B cell (primary cell): ENCODE measurements at regions of chr12 and their contacts with region 1.

Region 1: GRCh38 chr12:54398995-54399793 is 14.7 kb upstream of the ZNF385A start:
- DNase-seq: peak; percentile 88
- ATAC-seq: peak; percentile 99
- H3K4me3 ChIP-seq: no peak overlapping the region
- H3K4me3 Mint-ChIP-seq: no peak overlapping the region
- H3K27ac ChIP-seq: no peak overlapping the region
- H3K27ac Mint-ChIP-seq: no peak overlapping the region
- H3K4me1 ChIP-seq: peaks cover 0 to 1% of the 10 kb centered on the region in 2 donors
- H3K4me1 Mint-ChIP-seq: peaks cover 6% of the 10 kb centered on the region
- H3K27me3 ChIP-seq: no peaks in the 10 kb centered on the region
- H3K27me3 Mint-ChIP-seq: no peaks in the 10 kb centered on the region
- CTCF ChIP-seq: peak; percentile 98

Region 2: DNA sequence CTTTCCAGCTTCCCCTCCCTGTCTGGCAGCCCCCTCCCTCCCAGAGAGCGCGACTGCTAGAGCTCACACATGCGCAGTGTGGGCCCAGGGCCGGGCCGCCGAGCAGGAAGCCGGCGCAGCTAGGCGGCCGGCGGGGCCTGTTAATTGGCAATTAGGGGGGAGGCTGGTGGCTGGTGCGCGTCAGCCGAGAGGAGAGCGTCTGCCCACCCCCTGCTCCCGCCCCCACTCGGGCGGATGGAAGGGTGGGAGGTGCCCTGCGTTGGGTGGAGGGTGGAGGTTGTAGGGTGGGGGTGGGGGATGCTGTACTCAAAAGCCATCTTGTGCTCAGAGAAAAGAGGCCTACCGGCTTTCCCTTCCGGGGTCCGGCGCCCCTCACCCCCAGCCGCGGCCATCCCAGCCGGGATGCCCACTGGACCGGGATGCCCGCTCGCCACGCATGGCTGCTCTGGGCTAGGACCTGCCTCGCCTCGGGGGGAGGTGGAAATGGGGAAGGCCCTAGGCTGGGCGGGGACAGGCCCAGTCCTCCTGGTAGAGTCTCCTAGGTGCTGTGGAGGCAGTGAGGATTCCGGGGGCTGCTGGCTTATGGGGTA is 381.2 kb before region 1 on chr12:
- CTCF ChIA-PET with region 1: no interaction called
- POLR2A ChIA-PET with region 1: no interaction called
- intact Hi-C with region 1: no loop called
- DNase-seq: peak; percentile 84
- ATAC-seq: peak; percentile 87
- H3K4me3 ChIP-seq: peak overlapping the region in 4 of 5 experiments; percentile 43 to 71 (median 48)
- H3K4me3 Mint-ChIP-seq: peak overlapping the region; percentile 90
- H3K27ac ChIP-seq: peak overlapping the region; percentile 30 to 40
- H3K27ac Mint-ChIP-seq: peak overlapping the region; percentile 83
- H3K4me1 ChIP-seq: peaks cover 25 to 42% of the 10 kb centered on the region in 2 donors
- H3K4me1 Mint-ChIP-seq: peaks cover 22% of the 10 kb centered on the region
- H3K27me3 ChIP-seq: peaks cover 0 to 93% (median 73%) of the 10 kb centered on the region in 4 experiments
- H3K27me3 Mint-ChIP-seq: peaks cover 63% of the 10 kb centered on the region
- CTCF ChIP-seq: no peak

Region 3: DNA sequence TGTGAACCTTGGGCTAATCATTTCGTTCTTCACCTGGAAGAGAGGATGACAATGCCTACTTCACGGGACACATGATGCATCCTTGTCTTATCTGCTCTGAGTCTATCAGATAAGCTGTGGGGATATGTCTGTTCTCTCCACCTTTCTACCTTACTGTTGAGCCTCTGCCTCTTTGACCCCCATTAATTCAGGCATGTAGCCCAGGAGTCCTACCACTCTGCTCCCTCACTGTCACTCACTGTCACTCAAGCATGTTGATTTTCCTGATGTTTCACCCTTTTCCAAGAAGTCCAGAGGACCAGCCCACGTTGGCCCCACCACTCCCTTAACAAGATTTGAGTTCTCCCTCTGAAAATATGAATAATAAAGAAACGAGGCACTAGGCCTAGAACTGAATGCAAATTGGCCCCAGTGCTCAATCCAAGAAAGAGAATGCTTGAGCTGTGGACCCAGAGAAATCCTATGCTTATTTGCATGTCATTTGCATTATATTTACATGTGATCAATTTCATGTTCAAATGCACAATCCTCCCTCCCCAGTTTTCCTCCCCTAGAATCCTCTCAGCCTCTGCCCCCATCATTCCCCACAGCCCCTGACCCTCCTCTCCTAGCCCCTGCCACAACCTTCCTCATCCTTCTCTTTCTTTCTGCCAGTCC is 204.0 kb before region 1 on chr12:
- CTCF ChIA-PET with region 1: no interaction called
- POLR2A ChIA-PET with region 1: no interaction called
- intact Hi-C with region 1: no loop called
- DNase-seq: peak; percentile 8
- ATAC-seq: no peak
- H3K4me3 ChIP-seq: no peak overlapping the region
- H3K4me3 Mint-ChIP-seq: peak overlapping the region; percentile 62
- H3K27ac ChIP-seq: no peak overlapping the region
- H3K27ac Mint-ChIP-seq: no peak overlapping the region
- H3K4me1 ChIP-seq: peaks cover 35 to 36% of the 10 kb centered on the region in 2 donors
- H3K4me1 Mint-ChIP-seq: peaks cover 37% of the 10 kb centered on the region
- H3K27me3 ChIP-seq: peaks cover 0 to 67% (median 26%) of the 10 kb centered on the region in 4 experiments
- H3K27me3 Mint-ChIP-seq: peaks cover 57% of the 10 kb centered on the region
- CTCF ChIP-seq: no peak

Region 4: DNA sequence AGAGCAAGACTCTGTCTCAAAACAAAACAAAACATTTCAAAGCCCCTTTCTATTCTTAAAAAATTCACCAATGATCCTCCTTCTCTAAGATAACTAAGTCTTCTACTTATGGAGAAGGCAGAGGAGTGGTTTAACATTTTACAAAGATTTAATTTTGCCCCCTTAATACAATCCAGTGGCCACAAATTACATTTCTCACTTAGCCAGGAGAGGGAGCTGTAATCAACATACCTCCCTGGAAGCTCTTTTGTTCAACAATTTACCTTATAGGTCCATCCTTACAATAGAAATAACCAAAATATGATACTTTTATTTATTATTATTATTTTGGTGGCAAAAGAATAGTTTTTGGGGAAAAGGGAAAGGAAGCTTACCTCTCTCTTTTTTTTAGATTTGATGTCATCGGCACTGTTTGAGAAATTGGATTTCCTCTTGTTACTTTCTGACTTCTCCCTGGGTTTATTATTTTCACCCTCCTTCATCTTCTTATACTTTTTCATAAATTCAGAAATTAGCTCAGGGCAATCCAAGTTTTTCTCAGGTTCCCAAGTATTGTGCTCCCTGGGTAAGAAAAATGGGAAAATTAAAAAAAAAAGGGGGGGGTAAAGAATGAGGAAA is 147.4 kb before region 1 on chr12:
- CTCF ChIA-PET with region 1: interaction called, 6 read pairs
- POLR2A ChIA-PET with region 1: no interaction called
- intact Hi-C with region 1: loop called (anchors 1 kb)
- DNase-seq: peak; percentile 63
- ATAC-seq: peak; percentile 56
- H3K4me3 ChIP-seq: no peak overlapping the region
- H3K4me3 Mint-ChIP-seq: no peak overlapping the region
- H3K27ac ChIP-seq: no peak overlapping the region
- H3K27ac Mint-ChIP-seq: no peak overlapping the region
- H3K4me1 ChIP-seq: peaks cover 0 to 4% of the 10 kb centered on the region in 2 donors
- H3K4me1 Mint-ChIP-seq: peaks cover 6% of the 10 kb centered on the region
- H3K27me3 ChIP-seq: no peaks in the 10 kb centered on the region
- H3K27me3 Mint-ChIP-seq: no peaks in the 10 kb centered on the region
- CTCF ChIP-seq: peak; percentile 77

Region 5: GRCh38 chr12:54385241-54385914 is 13.8 kb before region 1 on chr12:
- CTCF ChIA-PET with region 1: interaction called, 41 read pairs
- POLR2A ChIA-PET with region 1: no interaction called
- intact Hi-C with region 1: no loop called
- DNase-seq: peak; percentile 73
- ATAC-seq: peak; percentile 62
- H3K4me3 ChIP-seq: peak overlapping the region in 3 of 5 experiments; percentile 1 to 31 (median 4)
- H3K4me3 Mint-ChIP-seq: peak overlapping the region; percentile 55
- H3K27ac ChIP-seq: peak overlapping the region; percentile 75 to 85
- H3K27ac Mint-ChIP-seq: peak overlapping the region; percentile 80
- H3K4me1 ChIP-seq: peaks cover 75 to 86% of the 10 kb centered on the region in 2 donors
- H3K4me1 Mint-ChIP-seq: peaks cover 69% of the 10 kb centered on the region
- H3K27me3 ChIP-seq: no peaks in the 10 kb centered on the region
- H3K27me3 Mint-ChIP-seq: no peaks in the 10 kb centered on the region
- CTCF ChIP-seq: no peak

Region 6: GRCh38 chr12:54439521-54440255 is 40.5 kb after region 1 on chr12:
- CTCF ChIA-PET with region 1: interaction called, 1,030 read pairs
- POLR2A ChIA-PET with region 1: interaction called, 18 read pairs
- intact Hi-C with region 1: loop called (anchors 1 kb)
- DNase-seq: peak; percentile 71
- ATAC-seq: peak; percentile 80
- H3K4me3 ChIP-seq: no peak overlapping the region
- H3K4me3 Mint-ChIP-seq: no peak overlapping the region
- H3K27ac ChIP-seq: no peak overlapping the region
- H3K27ac Mint-ChIP-seq: no peak overlapping the region
- H3K4me1 ChIP-seq: peaks cover 0 to 3% of the 10 kb centered on the region in 2 donors
- H3K4me1 Mint-ChIP-seq: peaks cover 2% of the 10 kb centered on the region
- H3K27me3 ChIP-seq: peaks cover 0 to 4% (median 0%) of the 10 kb centered on the region in 4 experiments
- H3K27me3 Mint-ChIP-seq: peaks cover 23% of the 10 kb centered on the region
- CTCF ChIP-seq: peak; percentile 89

Region 7: GRCh38 chr12:54497883-54498282 is 98.7 kb after region 1 on chr12:
- CTCF ChIA-PET with region 1: interaction called, 28 read pairs
- POLR2A ChIA-PET with region 1: no interaction called
- intact Hi-C with region 1: loop called (anchors 5 kb)
- DNase-seq: no peak
- ATAC-seq: peak; percentile 3
- H3K4me3 ChIP-seq: peak overlapping the region; percentile 76 to 97 (median 93)
- H3K4me3 Mint-ChIP-seq: peak overlapping the region; percentile 100
- H3K27ac ChIP-seq: peak overlapping the region; percentile 46 to 80
- H3K27ac Mint-ChIP-seq: peak overlapping the region; percentile 99
- H3K4me1 ChIP-seq: peaks cover 31 to 35% of the 10 kb centered on the region in 2 donors
- H3K4me1 Mint-ChIP-seq: peaks cover 46% of the 10 kb centered on the region
- H3K27me3 ChIP-seq: no peaks in the 10 kb centered on the region
- H3K27me3 Mint-ChIP-seq: no peaks in the 10 kb centered on the region
- CTCF ChIP-seq: no peak